PC-9 (cell line): ENCODE measurements at regions of chr1 and their contacts with region 1.

Region 1: GRCh38 chr1:93680757-93681550 is 683 bp downstream of the BCAR3 start:
- DNase-seq: peak; percentile 76 to 86
- H3K4me3 ChIP-seq: peak overlapping the region; percentile 80
- H3K27ac ChIP-seq: peak overlapping the region; percentile 81
- H3K4me1 ChIP-seq: peaks cover 69% of the 10 kb centered on the region
- H3K27me3 ChIP-seq: no peaks in the 10 kb centered on the region
- CTCF ChIP-seq: peak; percentile 72

Region 2: DNA sequence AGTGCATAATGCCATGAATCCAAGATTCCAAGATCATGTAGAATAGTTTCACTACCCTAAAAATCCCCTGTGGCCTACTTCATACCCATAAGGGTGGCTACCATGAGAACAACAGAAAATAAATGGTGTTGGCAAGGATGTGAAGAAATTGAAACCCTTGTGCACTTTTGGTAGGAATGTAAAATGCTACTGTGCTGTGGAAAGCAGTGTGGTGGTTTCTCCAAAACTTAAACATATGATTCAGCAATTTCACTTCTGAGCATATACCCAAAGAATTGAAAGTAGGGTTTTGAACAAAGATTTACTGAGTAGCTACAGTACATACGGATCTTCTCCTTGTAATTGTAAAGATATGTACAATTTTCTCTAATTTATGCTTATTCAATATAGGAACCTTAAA is 217.0 kb before region 1 on chr1:
- CTCF ChIA-PET with region 1: no interaction called
- POLR2A ChIA-PET with region 1: no interaction called
- intact Hi-C with region 1: no loop called
- DNase-seq: no peak
- H3K4me3 ChIP-seq: no peak overlapping the region
- H3K27ac ChIP-seq: no peak overlapping the region
- H3K4me1 ChIP-seq: no peaks in the 10 kb centered on the region
- H3K27me3 ChIP-seq: no peaks in the 10 kb centered on the region
- CTCF ChIP-seq: no peak

Region 3: GRCh38 chr1:93585059-93585966 is 95.6 kb before region 1 on chr1:
- CTCF ChIA-PET with region 1: no interaction called
- POLR2A ChIA-PET with region 1: no interaction called
- intact Hi-C with region 1: loop called (anchors 5 kb)
- DNase-seq: peak; percentile 99 to 100
- H3K4me3 ChIP-seq: peak overlapping the region; percentile 33; the same call in 1 of the 2 replicates
- H3K27ac ChIP-seq: peak overlapping the region; percentile 83
- H3K4me1 ChIP-seq: peaks cover 98% of the 10 kb centered on the region
- H3K27me3 ChIP-seq: no peaks in the 10 kb centered on the region
- CTCF ChIP-seq: no peak

Region 4: DNA sequence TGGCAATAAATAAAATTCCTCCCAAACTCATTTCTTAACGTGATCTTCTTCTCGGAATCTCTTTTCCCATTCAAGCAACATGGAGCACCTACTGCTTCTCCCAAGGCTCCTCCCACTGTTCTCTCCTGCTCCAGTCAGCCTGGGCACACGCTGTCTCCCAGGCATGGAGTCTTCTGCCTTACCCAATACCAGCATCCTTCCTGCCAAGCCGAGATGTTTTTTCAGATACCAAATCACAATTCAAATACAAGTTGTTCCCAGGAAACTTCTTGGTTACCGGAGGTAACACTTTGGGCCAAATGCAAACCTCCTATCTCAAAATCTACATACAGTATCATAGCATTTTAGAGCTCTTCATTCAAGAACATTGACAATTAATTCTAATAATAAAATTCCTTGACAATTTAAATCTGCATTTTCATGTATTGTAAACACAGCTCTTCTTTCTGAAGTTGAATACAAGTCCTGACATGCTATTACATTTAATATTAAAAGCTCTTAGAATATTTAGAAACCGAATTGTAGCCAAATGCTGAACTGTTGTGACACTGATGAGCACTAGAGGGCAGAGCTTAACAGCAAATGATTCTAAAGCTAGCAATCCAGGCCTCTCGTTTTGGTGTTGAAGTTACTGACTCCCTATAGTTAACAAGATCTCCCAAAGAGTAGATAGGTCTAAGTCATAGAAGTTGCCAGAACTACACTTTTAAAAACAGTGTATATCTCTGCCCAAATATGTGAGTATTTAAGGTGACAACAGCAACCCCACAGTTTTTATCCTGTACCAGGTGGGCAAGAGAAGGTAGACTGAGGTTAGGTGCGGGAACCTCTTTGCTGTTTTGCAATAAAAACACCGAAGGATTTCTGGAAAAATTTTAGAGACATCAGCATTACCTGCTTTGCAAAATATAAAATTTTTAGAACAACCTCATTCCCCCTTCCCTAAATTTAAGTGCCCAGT is 51.6 kb before region 1 on chr1:
- CTCF ChIA-PET with region 1: interaction called, 3 read pairs
- POLR2A ChIA-PET with region 1: interaction called, 3 read pairs
- intact Hi-C with region 1: loop called (anchors 2 kb)
- DNase-seq: peak; percentile 44 to 74
- H3K4me3 ChIP-seq: no peak overlapping the region
- H3K27ac ChIP-seq: peak overlapping the region; percentile 22
- H3K4me1 ChIP-seq: peaks cover 91% of the 10 kb centered on the region
- H3K27me3 ChIP-seq: no peaks in the 10 kb centered on the region
- CTCF ChIP-seq: peak; percentile 98

Region 5: DNA sequence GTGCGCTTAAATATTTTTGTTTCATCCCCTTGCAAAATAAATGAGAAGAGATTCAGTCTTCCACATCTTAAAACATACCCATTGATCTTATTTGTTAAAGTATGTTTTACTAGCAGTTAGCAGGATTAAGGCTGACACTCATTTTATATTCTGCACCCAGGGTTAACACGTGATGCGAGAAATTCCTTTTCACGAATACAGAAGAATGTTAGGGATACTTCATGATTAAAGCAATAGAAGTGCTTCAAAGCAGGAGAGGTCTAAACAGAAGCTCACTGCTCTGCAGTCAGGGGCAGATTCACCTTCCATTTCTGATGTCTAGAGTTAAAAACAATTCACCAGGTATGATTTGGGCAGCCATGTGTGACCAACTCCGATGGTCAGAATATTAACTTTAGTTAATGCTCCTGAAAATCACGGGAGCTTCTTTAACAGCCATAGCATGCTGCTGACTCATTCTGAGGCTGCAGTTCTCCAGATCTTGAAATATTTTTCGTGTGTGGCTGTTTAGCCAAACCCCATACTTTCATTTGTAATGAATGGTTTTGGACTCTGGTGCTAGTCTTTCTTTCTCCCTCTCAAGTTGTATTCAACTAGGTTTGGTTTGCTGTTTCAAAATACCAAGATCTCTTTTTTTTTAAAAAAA is 19.0 kb before region 1 on chr1:
- CTCF ChIA-PET with region 1: no interaction called
- POLR2A ChIA-PET with region 1: no interaction called
- intact Hi-C with region 1: loop called (anchors 1 kb)
- DNase-seq: peak; percentile 60 to 83
- H3K4me3 ChIP-seq: peak overlapping the region; percentile 1; the same call in 1 of the 2 replicates
- H3K27ac ChIP-seq: peak overlapping the region; percentile 86
- H3K4me1 ChIP-seq: peaks cover 74% of the 10 kb centered on the region
- H3K27me3 ChIP-seq: no peaks in the 10 kb centered on the region
- CTCF ChIP-seq: no peak

Region 6: GRCh38 chr1:93701619-93702018 is 20.7 kb after region 1 on chr1:
- CTCF ChIA-PET with region 1: interaction called, 4 read pairs
- POLR2A ChIA-PET with region 1: interaction called, 6 read pairs
- intact Hi-C with region 1: loop called (anchors 1 kb)
- DNase-seq: peak; percentile 97 to 100
- H3K4me3 ChIP-seq: no peak overlapping the region
- H3K27ac ChIP-seq: peak overlapping the region; percentile 97
- H3K4me1 ChIP-seq: peaks cover 68% of the 10 kb centered on the region
- H3K27me3 ChIP-seq: no peaks in the 10 kb centered on the region
- CTCF ChIP-seq: no peak

Region 7: GRCh38 chr1:93779540-93780192 is 98.7 kb after region 1 on chr1:
- CTCF ChIA-PET with region 1: no interaction called
- POLR2A ChIA-PET with region 1: no interaction called
- intact Hi-C with region 1: loop called (anchors 1 kb)
- DNase-seq: peak; percentile 93 to 100
- H3K4me3 ChIP-seq: peak overlapping the region; percentile 15; the same call in 1 of the 2 replicates
- H3K27ac ChIP-seq: peak overlapping the region; percentile 95
- H3K4me1 ChIP-seq: peaks cover 77% of the 10 kb centered on the region
- H3K27me3 ChIP-seq: no peaks in the 10 kb centered on the region
- CTCF ChIP-seq: peak; percentile 31; the same call in 1 of the 2 replicates

Region 8: DNA sequence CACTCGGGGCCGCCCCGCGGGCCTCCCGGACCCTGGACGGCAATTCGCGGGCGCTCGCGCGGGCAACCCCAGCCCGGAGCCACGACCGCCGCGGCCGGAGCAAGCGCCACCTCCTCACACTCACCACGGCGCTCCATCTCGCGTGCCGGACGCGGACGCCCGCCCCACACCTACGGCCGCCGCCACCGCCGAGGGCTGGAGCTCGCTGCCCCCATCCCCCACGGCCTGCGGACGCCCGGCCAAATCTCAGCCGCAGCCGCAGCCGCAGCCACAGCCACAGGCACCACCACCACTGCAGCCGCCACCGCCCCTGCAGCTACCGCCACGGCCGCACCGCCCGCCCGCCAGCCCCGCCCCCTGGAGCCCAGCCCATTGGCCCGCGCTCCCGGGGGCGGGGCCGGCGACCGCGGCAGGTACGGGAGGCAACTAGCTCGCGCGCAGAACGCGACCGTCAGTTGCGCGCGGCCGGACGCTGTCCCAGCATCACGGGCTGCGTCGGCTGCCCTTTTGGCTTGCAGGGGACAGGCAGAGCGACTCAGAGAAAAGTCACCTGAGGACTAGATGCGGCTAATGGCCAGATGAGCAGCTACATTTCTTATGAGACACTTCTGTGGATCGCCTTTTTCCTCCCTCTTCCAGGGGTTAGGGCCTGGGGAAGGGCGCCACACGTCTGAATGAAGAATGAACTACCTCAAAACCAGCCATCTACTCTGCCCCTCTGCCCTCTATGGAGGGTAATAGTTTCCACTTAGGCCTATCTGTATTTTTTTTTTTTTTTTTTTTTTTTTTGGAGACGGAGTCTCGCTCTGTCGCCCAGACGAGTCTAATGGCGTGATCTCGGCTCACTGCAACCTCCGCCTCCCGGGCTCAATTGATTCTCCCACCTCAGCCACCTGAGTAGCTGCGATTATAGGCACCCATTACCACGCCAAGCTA is 556.6 kb after region 1 on chr1 and contains the start of gene ARHGAP29:
- CTCF ChIA-PET with region 1: no interaction called
- POLR2A ChIA-PET with region 1: interaction called, 41 read pairs
- intact Hi-C with region 1: no loop called
- DNase-seq: peak; percentile 88 to 91
- H3K4me3 ChIP-seq: peak within 1 kb of the TSS; percentile 87
- H3K27ac ChIP-seq: peak within 1 kb of the TSS; percentile 85
- H3K4me1 ChIP-seq: peaks cover 70% of the 10 kb centered on the region
- H3K27me3 ChIP-seq: no peaks in the 10 kb centered on the region
- CTCF ChIP-seq: no peak
- total RNA-seq, gene ARHGAP29: 123 and 137 TPM in 2 replicates